HepG2 (cell line): ENCODE measurements at regions of chr2 and their contacts with region 1.

Region 1: GRCh38 chr2:63300835-63301234 is 250.2 kb downstream of the OTX1 start:
- DNase-seq: peak; percentile 80
- ATAC-seq: peak; percentile 84
- H3K4me3 ChIP-seq: no peak overlapping the region
- H3K27ac ChIP-seq: peak overlapping the region; percentile 38
- H3K4me1 ChIP-seq: peaks cover 9% of the 10 kb centered on the region
- H3K27me3 ChIP-seq: no peaks in the 10 kb centered on the region
- CTCF ChIP-seq: peak; percentile 67
- EP300 ChIP-seq: no peak
- POLR2A ChIP-seq: no peak
- RAD21 ChIP-seq: peak; percentile 82

Region 2: DNA sequence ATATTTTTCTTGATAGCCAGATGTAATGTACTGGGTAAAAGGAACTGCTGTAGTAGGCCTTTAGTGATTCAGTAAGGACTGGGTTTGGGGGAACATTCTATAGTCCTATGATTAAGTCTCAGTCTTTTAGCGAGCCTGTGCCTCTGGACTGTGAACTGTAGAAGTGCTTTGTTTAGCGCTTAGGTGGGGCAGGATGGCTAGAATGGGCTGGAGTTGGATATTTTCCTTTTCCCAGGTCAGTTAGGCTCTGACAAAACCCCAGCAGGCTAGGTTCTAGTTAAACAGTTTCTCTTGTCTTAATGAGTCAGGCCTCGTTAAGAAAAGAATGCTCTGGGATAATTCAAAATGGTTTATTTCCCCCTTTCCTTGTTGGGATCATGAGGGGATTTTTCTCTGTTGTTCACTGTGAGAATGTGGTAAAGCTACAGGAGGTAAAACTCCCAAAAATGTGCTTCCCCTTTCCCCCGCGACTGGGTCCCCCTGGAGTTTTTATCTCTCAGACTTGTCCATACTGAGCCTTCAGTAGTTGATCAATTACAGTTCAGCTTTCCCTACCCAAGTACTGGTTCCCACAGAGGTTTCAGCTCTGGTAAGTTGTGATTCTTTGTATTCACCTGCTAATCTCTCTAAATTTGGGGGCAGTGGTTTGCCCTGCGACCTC is 563.8 kb before region 1 on chr2:
- CTCF ChIA-PET with region 1: no interaction called
- POLR2A ChIA-PET with region 1: no interaction called
- in situ Hi-C with region 1: no loop called
- intact Hi-C with region 1: no loop called
- DNase-seq: peak; percentile 51
- ATAC-seq: peak; percentile 83
- H3K4me3 ChIP-seq: no peak overlapping the region
- H3K27ac ChIP-seq: peak overlapping the region; percentile 25
- H3K4me1 ChIP-seq: peaks cover 96% of the 10 kb centered on the region
- H3K27me3 ChIP-seq: no peaks in the 10 kb centered on the region
- CTCF ChIP-seq: no peak
- EP300 ChIP-seq: no peak
- POLR2A ChIP-seq: no peak
- RAD21 ChIP-seq: no peak

Region 3: GRCh38 chr2:62787386-62787785 is 513.4 kb before region 1 on chr2:
- CTCF ChIA-PET with region 1: no interaction called
- POLR2A ChIA-PET with region 1: no interaction called
- in situ Hi-C with region 1: no loop called
- intact Hi-C with region 1: loop called (anchors 10 kb)
- DNase-seq: no peak
- ATAC-seq: peak; percentile 31; the same call in 2 of the 3 replicates
- H3K4me3 ChIP-seq: no peak overlapping the region
- H3K27ac ChIP-seq: no peak overlapping the region
- H3K4me1 ChIP-seq: peaks cover 53% of the 10 kb centered on the region
- H3K27me3 ChIP-seq: no peaks in the 10 kb centered on the region
- CTCF ChIP-seq: peak; percentile 53
- EP300 ChIP-seq: no peak
- POLR2A ChIP-seq: no peak
- RAD21 ChIP-seq: no peak

Region 4: DNA sequence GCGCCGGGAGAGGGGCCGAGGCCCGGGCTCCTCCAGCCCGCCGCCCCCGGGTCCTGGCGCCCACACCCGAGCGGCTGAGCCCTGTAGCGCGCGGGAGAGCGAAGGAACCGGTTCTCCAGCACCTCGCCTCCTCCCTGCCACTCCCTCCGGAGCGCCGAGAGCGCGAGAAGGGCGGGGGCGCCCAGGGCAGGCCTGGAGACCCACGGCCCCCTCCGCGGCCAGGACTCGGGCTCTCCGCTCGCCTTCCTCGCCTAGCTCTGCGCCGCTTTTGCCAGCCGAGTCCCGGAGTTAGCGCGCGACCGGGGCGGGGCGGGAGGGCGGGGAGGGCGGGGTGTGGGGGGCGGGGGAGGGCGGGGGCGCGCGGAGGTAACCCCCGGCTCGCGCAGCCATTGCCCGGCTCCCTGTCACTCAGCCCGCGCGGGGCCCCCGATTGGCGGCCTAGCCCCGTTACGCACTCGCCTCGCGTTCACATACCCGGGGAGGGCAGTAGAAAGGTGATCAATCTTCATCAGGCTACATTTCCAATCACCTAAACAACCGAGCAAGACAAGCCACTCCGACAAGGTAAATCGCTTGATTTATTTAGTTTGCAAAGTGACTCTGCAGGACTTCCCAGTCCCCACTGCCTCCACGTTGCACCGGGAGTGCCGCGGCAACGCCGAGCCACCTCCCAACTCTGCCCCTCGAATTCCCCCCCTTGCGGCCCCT is 250.3 kb before region 1 on chr2 and contains the start of gene OTX1:
- CTCF ChIA-PET with region 1: no interaction called
- POLR2A ChIA-PET with region 1: no interaction called
- in situ Hi-C with region 1: no loop called
- intact Hi-C with region 1: loop called (anchors 2 kb)
- DNase-seq: peak; percentile 82
- ATAC-seq: peak; percentile 87
- H3K4me3 ChIP-seq: peak within 1 kb of the TSS; percentile 80 to 99 (median 98)
- H3K27ac ChIP-seq: peak within 1 kb of the TSS; percentile 90
- H3K4me1 ChIP-seq: peaks cover 30% of the 10 kb centered on the region
- H3K27me3 ChIP-seq: no peaks in the 10 kb centered on the region; a peak in 1 of 5 replicates
- CTCF ChIP-seq: peak; percentile 18; the same call in 1 of the 2 replicates
- EP300 ChIP-seq: no peak
- POLR2A ChIP-seq: peak; percentile 75 to 87
- RAD21 ChIP-seq: peak; percentile 77
- total RNA-seq, gene OTX1: 3.0 and 5.0 TPM in 2 replicates

Region 5: GRCh38 chr2:63078852-63079606 is 221.8 kb before region 1 on chr2:
- CTCF ChIA-PET with region 1: interaction called, 8 read pairs
- POLR2A ChIA-PET with region 1: no interaction called
- in situ Hi-C with region 1: loop called (anchors 25 kb)
- intact Hi-C with region 1: loop called (anchors 1 kb)
- DNase-seq: peak; percentile 61
- ATAC-seq: peak; percentile 90
- H3K4me3 ChIP-seq: no peak overlapping the region
- H3K27ac ChIP-seq: no peak overlapping the region
- H3K4me1 ChIP-seq: peaks cover 27% of the 10 kb centered on the region
- H3K27me3 ChIP-seq: no peaks in the 10 kb centered on the region
- CTCF ChIP-seq: peak; percentile 83
- EP300 ChIP-seq: no peak
- POLR2A ChIP-seq: no peak
- RAD21 ChIP-seq: peak; percentile 73

Region 6: GRCh38 chr2:63189026-63189425 is 111.8 kb before region 1 on chr2:
- CTCF ChIA-PET with region 1: no interaction called
- POLR2A ChIA-PET with region 1: no interaction called
- in situ Hi-C with region 1: no loop called
- intact Hi-C with region 1: loop called (anchors 5 kb)
- DNase-seq: peak; percentile 71
- ATAC-seq: peak; percentile 74
- H3K4me3 ChIP-seq: no peak overlapping the region; a peak in 1 of 6 replicates
- H3K27ac ChIP-seq: no peak overlapping the region
- H3K4me1 ChIP-seq: peaks cover 58% of the 10 kb centered on the region
- H3K27me3 ChIP-seq: no peaks in the 10 kb centered on the region
- CTCF ChIP-seq: peak; percentile 92
- EP300 ChIP-seq: peak in 1 of 2 experiments; percentile 12; a peak in 1 of 4 replicates
- POLR2A ChIP-seq: no peak
- RAD21 ChIP-seq: peak; percentile 68